ENCODE measurements at regions of chr15 and their contacts with region 1.

Region 1: DNA sequence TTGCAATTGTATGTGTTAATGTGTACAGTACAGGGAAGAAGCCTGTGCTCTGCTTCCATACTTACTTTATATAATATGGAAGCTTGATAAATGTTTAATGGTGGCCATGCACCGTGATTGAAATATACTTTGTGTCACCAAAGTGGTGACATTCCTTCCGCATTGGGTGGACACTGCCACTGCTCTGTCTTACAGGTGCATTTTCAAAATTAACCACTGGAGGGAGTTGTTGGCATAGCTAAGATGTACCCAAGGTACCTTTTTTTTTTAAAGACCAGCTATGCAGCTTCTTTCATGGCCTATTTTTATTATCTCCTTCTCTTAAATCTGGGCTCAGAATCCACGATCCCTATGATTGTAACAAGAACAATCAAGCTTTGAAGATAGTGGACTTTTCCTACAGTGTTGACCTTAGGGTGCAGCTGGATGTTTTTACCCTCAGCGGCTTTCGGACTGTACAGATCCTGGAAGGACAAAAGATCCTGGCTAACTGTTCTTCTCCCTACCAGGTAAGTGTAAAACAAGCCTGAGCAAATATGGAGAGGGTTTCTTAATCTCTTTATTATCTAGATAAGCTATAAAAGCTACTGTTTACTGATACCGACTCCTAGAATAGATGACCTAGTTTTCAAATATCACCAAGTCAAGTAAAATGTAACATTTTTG is 21.6 kb upstream of the PAK6 start:
- DNase-seq: peak in 1 of 2 donors; percentile 67
- ATAC-seq: peak; percentile 80 to 92 (median 82)
- H3K4me3 ChIP-seq: no peak overlapping the region
- H3K27ac ChIP-seq: no peak overlapping the region
- H3K4me1 ChIP-seq: no peaks in the 10 kb centered on the region
- H3K27me3 ChIP-seq: no peaks in the 10 kb centered on the region
- CTCF ChIP-seq: peak; percentile 68 to 92 (median 87)

Region 2: GRCh38 chr15:39616731-39617455 is 600.4 kb before region 1 on chr15:
- intact Hi-C with region 1: no loop called
- DNase-seq: no peak
- ATAC-seq: no peak
- H3K4me3 ChIP-seq: no peak overlapping the region
- H3K27ac ChIP-seq: no peak overlapping the region
- H3K4me1 ChIP-seq: peaks cover 0 to 14% (median 0%) of the 10 kb centered on the region in 9 donors
- H3K27me3 ChIP-seq: no peaks in the 10 kb centered on the region
- CTCF ChIP-seq: no peak

Region 3: DNA sequence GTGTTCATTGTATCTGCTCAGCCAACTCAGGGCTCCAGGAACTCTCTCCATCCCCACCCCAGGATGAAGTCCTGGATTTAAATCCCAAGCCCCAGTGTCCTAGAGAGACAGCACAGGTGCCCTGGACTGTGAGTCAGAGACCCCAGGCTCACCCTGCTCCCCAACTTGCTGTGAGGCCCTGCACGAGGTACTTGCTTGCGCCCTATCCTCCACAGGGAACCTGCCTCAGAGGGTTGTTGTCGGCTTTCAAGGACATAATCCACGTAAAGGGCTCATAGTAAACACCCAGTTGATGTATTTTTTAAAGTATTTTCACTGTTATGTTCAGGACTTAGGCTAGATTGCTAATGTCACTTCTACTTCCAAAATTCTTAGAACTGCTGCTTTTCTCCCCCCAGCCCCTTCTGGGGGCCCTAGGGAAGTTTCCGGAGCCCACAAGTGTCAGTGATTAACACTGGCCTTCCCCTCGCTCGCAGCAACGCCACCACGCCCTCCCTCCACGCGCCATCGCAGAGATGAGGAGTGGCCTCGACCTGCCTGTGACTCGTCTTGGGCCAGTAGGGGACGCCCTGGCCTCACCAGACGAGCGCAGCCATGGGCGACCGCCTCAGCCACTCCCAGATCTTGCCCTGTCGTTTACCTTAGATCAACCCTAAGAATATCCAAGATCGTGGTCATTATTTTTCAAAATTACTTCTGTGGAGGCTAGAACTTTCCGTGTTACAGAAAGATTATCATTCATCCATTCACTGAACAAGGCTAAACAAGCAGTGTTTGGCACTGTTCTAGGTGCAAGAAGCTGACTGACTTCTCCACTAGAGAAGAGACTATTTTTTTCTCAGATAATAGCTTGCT is 172.3 kb before region 1 on chr15:
- intact Hi-C with region 1: loop called in 7 of 10 experiments (anchors 2 to 5 kb)
- DNase-seq: peak; percentile 87 to 89
- ATAC-seq: peak; percentile 91 to 96 (median 94)
- H3K4me3 ChIP-seq: peak overlapping the region in 5 of 10 donors; percentile 2 to 22 (median 19)
- H3K27ac ChIP-seq: peak overlapping the region in 8 of 10 donors; percentile 36 to 74 (median 46)
- H3K4me1 ChIP-seq: peaks cover 3 to 67% (median 59%) of the 10 kb centered on the region in 9 donors
- H3K27me3 ChIP-seq: no peaks in the 10 kb centered on the region
- CTCF ChIP-seq: peak; percentile 79 to 99 (median 95)

Region 4: DNA sequence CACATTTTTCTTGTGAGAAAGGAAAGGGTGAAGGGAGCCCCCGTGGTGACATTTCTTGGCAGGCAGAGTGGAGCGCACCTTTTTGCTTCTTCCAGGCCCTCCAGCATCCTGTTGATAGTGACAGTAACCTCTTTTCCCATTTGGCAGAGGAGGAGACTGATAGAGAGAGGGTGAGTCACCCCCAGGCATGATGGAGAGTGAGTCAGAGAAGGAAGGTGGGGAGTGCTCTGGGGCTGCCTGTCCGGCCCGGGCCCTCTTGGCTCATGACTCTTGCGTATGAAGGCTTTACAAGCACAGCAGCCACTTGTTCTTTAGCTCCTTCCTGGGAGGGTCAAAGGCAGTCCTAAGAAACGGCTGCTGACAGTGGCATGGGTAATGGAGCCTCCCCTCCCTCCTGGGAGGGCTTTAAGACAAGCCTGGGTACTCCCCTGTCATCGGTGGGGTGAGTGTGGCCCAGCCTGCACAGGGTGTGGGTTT is 49.6 kb after region 1 on chr15:
- intact Hi-C with region 1: loop called in 2 of 10 experiments (anchors 2 to 5 kb)
- DNase-seq: peak in 1 of 2 donors; percentile 32
- ATAC-seq: peak in 5 of 8 donors; percentile 45 to 81 (median 56)
- H3K4me3 ChIP-seq: no peak overlapping the region
- H3K27ac ChIP-seq: no peak overlapping the region
- H3K4me1 ChIP-seq: peaks cover 0 to 10% (median 0%) of the 10 kb centered on the region in 9 donors
- H3K27me3 ChIP-seq: no peaks in the 10 kb centered on the region
- CTCF ChIP-seq: no peak

Region 5: DNA sequence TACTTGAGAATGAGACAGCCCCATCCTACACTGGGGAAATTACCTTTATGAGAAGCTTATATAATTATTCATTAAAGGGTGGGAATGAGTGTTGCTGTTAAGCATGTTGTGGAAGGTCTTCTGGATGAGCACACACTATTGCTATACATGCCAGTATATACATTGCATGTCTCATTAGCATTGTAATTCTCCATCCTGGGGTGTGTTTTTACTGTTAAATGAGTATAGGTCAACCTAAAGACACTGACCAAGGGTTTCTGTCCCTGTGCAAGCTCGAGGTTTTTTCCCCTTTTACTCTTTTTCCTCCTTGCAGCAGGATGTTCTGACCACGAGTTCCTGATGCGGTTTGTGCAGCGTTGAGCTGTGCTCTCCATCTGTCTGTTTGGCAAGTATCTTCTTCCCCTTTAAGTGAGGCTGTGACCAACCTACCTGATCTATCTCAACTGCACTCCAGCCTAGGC is 181.2 kb after region 1 on chr15:
- intact Hi-C with region 1: loop called in 1 of 10 experiments (anchors 10 kb)
- DNase-seq: no peak
- ATAC-seq: peak in 3 of 8 donors; percentile 53 to 65 (median 63)
- H3K4me3 ChIP-seq: no peak overlapping the region
- H3K27ac ChIP-seq: peak overlapping the region in 2 of 10 donors; percentile 1 to 28
- H3K4me1 ChIP-seq: peaks cover 0 to 28% (median 0%) of the 10 kb centered on the region in 9 donors
- H3K27me3 ChIP-seq: no peaks in the 10 kb centered on the region
- CTCF ChIP-seq: no peak

Measured in heart right ventricle (tissue), 16 donors.